ENCODE measurements at regions of chr12 and their contacts with region 1.

Region 1: DNA sequence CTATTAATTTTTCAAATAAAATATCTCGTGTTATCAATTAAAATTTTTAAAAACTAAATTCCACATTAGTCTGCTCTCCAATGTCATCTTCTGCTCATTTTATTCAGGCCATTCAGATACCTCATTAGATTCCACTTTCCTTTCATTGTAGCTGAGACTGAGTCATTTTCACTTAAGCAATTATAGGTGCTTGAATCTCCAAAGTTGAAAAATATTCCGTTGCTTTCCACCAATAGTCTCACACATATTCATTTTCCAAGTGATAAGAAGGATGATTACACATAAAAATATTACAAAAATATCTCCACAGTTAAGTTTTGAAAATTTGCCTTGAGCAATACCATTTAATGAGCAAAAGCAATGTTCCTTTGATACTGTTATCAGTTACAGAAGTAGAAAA is 36.5 kb upstream of the YBX3 start:
- DNase-seq: no peak

Region 2: DNA sequence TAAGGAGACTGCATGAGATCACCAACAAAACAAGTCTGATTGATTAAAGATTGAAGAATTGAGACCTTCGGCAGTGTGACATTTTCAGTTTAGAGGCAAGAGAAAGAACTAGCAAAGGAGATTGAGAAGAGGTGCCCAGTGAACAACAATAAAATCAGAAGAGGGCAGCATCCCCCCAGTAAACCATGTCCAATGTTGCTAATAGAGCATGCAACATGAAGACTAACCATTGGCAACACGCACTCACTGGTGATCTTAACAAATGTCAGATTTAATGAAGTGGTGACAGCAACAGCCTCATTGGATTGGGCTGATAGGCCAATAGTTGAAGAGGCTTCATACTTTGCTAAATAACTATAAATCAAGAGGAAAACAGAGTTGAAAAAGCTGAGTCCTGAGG is 200.1 kb after region 1 on chr12:
- intact Hi-C with region 1: no loop called
- DNase-seq: peak in 23 of 42 donors; percentile 15 to 78 (median 40)

Region 3: GRCh38 chr12:11486623-11487444 is 727.2 kb after region 1 on chr12:
- intact Hi-C with region 1: loop called (anchors 10 kb)
- DNase-seq: peak; percentile 44 to 90 (median 78)